GM10248 (cell line): ENCODE measurements at regions of chr17 and their contacts with region 1.

Region 1: DNA sequence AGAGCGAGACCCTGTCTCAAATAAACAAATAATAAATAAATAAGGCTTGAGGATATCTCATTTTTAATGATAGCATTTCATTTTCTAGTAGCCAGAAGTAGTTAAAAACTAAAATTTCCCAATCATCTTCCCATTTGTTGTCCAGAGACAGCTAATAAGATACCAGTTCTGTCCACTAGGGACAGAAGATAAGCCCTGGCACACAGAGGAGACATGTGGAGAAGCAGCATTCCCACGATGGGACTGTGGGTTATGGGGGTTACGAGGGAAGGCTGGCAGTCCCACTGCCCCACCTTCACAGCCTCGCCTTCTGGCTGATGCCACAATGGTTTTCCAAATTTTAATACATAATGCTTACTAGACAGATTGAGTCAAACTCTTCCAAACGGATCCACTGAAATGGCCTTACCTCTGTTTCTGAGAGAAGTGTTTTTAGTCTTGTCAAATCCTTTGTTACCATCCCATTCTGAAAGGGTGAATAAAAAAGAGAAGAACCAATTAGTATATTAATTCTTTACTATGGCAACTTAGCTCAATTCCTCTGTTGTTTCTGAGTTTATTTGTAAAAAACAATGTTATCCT is 44.2 kb downstream of the HELZ start:
- DNase-seq: no peak
- CTCF ChIP-seq: peak; percentile 8

Region 2: DNA sequence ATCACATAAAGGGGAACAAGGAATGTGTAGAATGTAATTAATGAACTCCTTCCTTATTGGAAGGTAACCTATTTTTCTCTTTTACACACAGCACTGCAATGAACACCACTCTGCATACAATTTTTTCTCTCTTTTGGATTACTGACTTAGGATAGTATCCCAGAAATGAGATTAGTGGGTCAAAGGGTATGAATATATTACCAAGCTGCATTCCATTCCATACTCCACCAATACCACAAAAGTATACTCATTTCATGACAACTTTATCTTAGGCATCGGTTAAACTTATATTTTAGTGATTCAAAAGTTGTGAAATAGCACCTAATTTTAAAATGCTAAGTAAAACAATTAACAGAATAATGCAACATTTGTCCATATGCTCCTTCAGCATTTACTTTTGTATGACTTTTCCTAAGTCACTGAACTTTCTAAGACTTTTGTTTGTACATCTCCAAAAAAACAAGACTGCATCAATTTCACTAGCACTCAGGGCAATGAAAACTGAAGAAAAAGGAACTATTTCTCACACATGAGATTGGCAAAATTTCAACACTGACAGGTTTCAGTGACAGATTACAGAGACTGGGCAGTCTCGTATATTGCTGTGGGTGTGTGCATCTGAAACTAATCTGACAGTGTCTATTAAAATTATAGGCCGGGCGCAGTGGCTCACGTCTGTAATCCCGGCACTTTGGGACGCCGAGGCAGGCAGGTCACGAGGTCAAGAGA is 12.0 kb after region 1 on chr17:
- CTCF ChIA-PET with region 1: interaction called, 11 read pairs
- POLR2A ChIA-PET with region 1: no interaction called
- DNase-seq: no peak
- CTCF ChIP-seq: no peak

Region 3: GRCh38 chr17:67746704-67747571 is 546.1 kb after region 1 on chr17:
- CTCF ChIA-PET with region 1: no interaction called
- POLR2A ChIA-PET with region 1: interaction called, 13 read pairs
- DNase-seq: no peak
- CTCF ChIP-seq: no peak